ENCODE measurements at regions of chr2 and their contacts with region 1.

Region 1: GRCh38 chr2:70301344-70302194 is at the start of gene FAM136A:
- DNase-seq: peak; percentile 85
- H3K4me3 Mint-ChIP-seq: peak within 1 kb of the TSS; percentile 91
- H3K27ac Mint-ChIP-seq: peak within 1 kb of the TSS; percentile 93
- H3K4me1 Mint-ChIP-seq: peaks cover 41% of the 10 kb centered on the region
- H3K27me3 Mint-ChIP-seq: peaks cover 6% of the 10 kb centered on the region
- total RNA-seq, gene FAM136A: 88.9 and 89.1 TPM in 2 replicates

Region 2: DNA sequence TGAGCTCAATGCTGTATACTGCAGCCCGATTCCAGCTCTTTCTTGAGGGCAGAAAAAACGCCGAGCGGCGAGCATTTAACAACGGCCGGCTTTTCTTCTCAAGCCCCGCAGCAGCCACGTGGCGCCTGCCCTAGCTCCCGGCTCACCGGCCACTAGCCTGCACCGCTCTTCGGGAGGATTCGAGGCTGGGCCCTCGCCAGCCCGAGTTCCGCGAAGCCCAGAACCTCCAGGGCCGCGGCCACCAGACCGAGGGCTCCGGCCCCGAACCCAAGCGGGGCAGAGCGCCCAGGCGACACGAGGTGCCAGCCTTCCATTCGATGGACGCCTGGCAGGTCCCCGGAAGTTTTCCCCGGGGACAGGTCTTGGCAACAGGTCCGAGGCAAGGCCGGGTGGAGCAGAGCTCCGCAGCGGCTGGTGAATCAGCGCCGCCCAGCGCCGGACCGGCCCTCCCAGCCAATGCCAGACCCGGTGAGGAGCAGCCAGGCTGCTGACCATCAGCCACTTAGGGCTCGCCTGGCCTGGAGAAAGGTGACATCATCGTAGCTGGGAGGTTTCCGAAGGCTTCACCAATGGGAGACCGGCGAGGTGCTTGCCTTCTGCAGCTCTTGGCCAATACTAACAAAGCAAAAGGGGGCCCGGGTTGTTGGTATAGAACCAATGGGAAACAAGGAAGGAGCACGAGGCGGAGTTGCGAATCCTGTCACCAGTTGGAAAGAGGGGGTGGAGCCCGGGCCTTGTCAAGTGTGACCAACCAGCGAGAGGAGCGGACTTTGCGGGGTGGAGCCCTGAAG is 387.2 kb before region 1 on chr2:
- intact Hi-C with region 1: loop called (anchors 1 kb)
- DNase-seq: peak; percentile 100
- H3K4me3 Mint-ChIP-seq: peak overlapping the region; percentile 78
- H3K27ac Mint-ChIP-seq: peak overlapping the region; percentile 90
- H3K4me1 Mint-ChIP-seq: peaks cover 42% of the 10 kb centered on the region
- H3K27me3 Mint-ChIP-seq: no peaks in the 10 kb centered on the region

Region 3: GRCh38 chr2:70381831-70382267 is 80.3 kb after region 1 on chr2:
- intact Hi-C with region 1: no loop called
- DNase-seq: no peak
- H3K4me3 Mint-ChIP-seq: no peak overlapping the region
- H3K27ac Mint-ChIP-seq: no peak overlapping the region
- H3K4me1 Mint-ChIP-seq: no peaks in the 10 kb centered on the region
- H3K27me3 Mint-ChIP-seq: peaks cover 4% of the 10 kb centered on the region

Region 4: DNA sequence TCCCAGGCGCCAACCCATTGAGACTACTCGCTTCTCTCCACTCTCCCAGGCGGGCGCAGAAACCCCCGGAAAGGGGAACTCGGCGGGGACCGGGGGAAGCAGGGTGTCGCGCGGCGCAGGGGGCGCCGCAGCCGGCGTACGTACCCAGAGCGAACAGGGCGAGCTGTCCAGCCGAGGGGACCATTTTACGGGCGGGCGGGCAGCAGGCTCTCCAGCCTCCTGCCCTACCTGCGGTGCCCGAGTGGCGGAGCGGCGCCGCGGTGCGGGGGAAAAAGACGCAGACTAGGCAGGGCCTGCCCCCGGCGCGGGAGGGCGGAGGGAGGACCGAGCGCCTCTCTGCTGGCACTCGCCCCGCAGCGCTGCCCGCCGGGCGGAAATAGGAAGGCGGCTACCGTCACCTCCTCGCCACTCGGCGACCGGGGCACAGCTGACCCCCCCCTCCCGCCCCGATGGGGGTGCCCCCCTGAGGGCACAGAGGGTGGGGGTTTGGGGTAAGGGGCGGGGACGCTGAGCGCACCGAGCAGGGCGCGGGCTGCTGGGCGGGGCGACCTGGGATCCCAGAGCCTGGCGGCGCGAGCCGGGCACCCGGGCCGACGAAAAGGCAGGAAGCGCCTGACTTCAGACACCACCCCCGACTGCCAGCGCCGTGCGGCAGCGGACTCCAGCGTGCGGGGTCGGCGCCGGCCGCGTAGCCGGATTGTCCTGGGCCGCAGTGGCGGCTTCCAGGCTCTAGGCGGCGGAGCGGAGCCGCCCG is 252.2 kb after region 1 on chr2 and contains the start of gene TGFA:
- intact Hi-C with region 1: loop called (anchors 5 kb)
- DNase-seq: peak; percentile 46
- H3K4me3 Mint-ChIP-seq: peak within 1 kb of the TSS; percentile 82
- H3K27ac Mint-ChIP-seq: no peak within 1 kb of the TSS
- H3K4me1 Mint-ChIP-seq: peaks cover 24% of the 10 kb centered on the region
- H3K27me3 Mint-ChIP-seq: peaks cover 45% of the 10 kb centered on the region
- total RNA-seq, gene TGFA: not detected in 2 replicates

Region 5: GRCh38 chr2:70647873-70648481 is 346.4 kb after region 1 on chr2:
- intact Hi-C with region 1: loop called (anchors 1 kb)
- DNase-seq: peak; percentile 53
- H3K4me3 Mint-ChIP-seq: no peak overlapping the region
- H3K27ac Mint-ChIP-seq: no peak overlapping the region
- H3K4me1 Mint-ChIP-seq: no peaks in the 10 kb centered on the region
- H3K27me3 Mint-ChIP-seq: peaks cover 18% of the 10 kb centered on the region

Region 6: GRCh38 chr2:70789304-70790135 is 488.0 kb after region 1 on chr2:
- intact Hi-C with region 1: loop called (anchors 2 kb)
- DNase-seq: peak; percentile 55
- H3K4me3 Mint-ChIP-seq: peak overlapping the region; percentile 75
- H3K27ac Mint-ChIP-seq: no peak overlapping the region
- H3K4me1 Mint-ChIP-seq: peaks cover 13% of the 10 kb centered on the region
- H3K27me3 Mint-ChIP-seq: peaks cover 46% of the 10 kb centered on the region

Region 7: GRCh38 chr2:70948337-70949003 is 646.9 kb after region 1 on chr2:
- intact Hi-C with region 1: loop called (anchors 2 kb)
- DNase-seq: peak; percentile 67
- H3K4me3 Mint-ChIP-seq: peak overlapping the region; percentile 81
- H3K27ac Mint-ChIP-seq: no peak overlapping the region
- H3K4me1 Mint-ChIP-seq: peaks cover 16% of the 10 kb centered on the region
- H3K27me3 Mint-ChIP-seq: peaks cover 32% of the 10 kb centered on the region

Region 8: DNA sequence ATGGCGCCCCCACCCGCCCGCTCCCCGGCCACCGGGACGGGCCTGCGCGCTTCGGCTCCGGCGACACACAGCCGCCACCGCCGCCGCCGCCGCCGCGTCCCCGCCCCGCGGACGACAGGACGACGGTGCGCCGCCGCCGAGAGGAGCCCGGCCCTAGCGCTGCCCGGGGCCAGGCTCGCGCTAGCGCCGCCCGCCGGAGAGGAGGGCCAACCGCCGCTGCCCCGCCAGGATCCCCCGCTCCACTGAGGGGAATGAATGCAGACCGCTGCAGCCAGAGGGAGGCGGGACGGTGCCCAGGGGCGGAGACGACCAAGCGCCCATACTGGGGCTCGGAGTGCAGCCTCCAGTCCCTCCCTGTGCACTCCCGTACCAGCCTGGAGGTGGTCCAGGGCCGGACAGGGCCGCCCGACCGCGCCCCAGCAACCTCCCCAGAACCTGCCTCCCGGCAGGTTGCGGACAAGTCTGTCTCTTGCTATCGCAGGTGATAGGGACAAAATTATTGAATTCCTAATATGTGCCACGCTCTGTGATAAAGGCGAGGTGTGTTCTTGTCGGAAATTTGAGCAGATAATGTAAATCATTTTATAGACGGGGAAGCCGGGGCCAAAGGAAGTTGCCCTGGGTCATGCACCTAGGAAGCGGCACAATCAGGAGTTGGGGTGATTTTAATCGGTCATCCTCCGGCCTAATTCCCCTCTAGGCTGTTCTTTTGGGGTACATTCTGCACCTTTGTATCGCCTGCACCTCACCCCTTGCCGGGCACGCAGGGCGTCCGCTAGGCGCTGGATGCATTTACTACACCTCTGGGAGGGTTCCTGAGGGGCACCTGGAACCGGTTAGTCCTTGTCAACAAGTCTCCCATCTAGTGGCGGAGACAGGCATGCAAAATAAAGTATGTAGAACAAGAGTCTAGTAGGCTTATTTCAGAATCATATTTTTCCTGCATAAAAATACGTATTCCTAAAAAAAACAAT is 693.5 kb after region 1 on chr2 and contains the start of gene TEX261:
- intact Hi-C with region 1: loop called (anchors 1 kb)
- DNase-seq: peak; percentile 90
- H3K4me3 Mint-ChIP-seq: peak within 1 kb of the TSS; percentile 99
- H3K27ac Mint-ChIP-seq: peak within 1 kb of the TSS; percentile 92
- H3K4me1 Mint-ChIP-seq: peaks cover 45% of the 10 kb centered on the region
- H3K27me3 Mint-ChIP-seq: peaks cover 4% of the 10 kb centered on the region
- total RNA-seq, gene TEX261: 89.4 and 97.4 TPM in 2 replicates